Activated naive CD4-positive, alpha-beta T cell treated with anti-CD3 and anti-CD28 coated beads, Interleukin-2, amount 10 ng/mL, durations not matched to agents 7 days and 5 days (primary cell): ENCODE measurements at regions of chr20 and their contacts with region 1.

Region 1: DNA sequence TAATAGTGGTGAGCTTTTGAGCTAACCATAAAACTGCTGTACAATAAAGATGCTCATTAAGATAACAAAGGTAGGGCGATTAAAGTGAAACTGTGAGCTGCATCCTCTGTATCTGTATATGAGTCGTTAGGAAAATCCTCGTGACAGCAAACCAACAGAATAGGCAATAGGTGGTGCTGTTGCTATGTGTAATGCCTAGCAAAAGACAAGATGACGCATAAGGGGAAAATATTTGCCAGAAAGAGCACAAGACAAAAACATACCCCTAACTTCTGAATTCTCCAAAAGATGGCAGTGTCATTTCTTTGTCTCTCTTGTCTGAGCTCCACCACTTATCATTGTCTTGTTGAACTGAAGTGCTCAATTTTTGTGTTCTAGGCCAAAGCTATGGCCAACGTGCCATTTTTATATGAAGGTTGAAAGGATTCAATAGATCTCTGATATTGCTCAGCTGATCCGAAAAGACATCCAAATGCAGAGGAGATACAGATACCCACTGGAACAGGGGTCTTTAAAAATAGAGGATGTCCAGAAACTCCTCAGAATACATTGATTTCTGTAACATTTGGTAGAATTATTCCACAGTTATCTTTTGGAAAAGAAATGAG is 56.3 kb upstream of the ANKEF1 start:
- DNase-seq: peak; percentile 50
- H3K4me3 Mint-ChIP-seq: no peak overlapping the region
- H3K27ac Mint-ChIP-seq: no peak overlapping the region
- H3K4me1 Mint-ChIP-seq: no peaks in the 10 kb centered on the region
- H3K27me3 Mint-ChIP-seq: no peaks in the 10 kb centered on the region

Region 2: DNA sequence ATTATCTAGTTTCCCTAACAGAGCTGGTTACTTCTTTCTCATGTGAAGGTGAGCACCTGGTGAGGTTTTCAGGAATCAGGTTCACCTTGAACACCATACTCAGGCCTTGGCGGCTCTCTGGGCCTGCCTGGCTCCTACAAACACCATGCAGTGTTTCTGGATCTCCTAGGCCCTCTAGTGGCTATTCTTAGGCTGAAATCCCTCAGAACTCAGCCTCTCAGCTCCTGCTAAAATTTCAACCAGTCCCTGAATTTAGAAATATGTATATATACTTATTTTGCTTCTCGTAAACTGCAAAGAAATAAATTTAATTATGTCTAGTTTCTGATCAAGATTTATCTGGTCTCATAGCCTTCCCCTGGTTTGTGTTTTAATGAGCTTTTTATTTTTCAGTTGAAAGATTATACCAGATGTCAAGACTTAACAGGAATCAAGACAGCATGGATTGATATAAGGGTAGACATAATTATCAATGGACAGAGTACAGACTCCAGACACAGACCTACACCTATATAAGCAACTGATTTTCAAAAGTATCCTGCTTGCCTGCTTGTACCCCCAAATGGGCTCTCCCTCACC is 112.2 kb after region 1 on chr20:
- CTCF ChIA-PET with region 1: interaction called, 72 read pairs
- DNase-seq: peak; percentile 27
- H3K4me3 Mint-ChIP-seq: no peak overlapping the region
- H3K27ac Mint-ChIP-seq: no peak overlapping the region
- H3K4me1 Mint-ChIP-seq: no peaks in the 10 kb centered on the region
- H3K27me3 Mint-ChIP-seq: no peaks in the 10 kb centered on the region

Region 3: DNA sequence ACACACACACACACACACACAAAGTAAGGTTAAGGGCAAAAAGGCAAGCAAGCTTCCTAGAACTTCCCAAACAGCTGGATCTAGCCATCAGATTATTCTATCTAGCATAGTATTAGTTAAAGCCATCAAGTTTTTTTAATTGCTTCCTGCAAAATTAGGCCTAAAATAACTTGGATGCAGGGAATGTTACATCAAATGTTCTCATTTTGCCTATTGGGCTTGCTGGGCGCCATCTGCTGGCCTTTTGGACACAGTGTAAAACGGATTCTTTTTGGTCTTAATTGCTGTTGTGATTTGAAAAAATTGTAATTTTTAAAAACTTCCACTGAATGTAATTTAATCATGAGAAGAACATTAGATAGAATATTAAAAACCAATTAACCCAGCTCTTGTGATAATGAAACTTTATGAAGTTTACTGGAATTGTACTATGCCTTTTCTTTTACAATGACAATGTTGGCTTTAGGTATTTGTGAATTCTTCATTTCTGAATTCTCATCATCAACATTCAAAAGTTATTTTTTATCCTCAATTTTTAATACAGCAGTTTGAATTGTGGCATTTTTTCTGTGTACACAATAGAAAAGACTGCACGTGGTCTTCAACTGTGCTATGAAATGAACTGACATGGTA is 448.7 kb after region 1 on chr20:
- CTCF ChIA-PET with region 1: interaction called, 21 read pairs
- DNase-seq: peak; percentile 63
- H3K4me3 Mint-ChIP-seq: no peak overlapping the region
- H3K27ac Mint-ChIP-seq: no peak overlapping the region
- H3K4me1 Mint-ChIP-seq: peaks cover 30% of the 10 kb centered on the region
- H3K27me3 Mint-ChIP-seq: no peaks in the 10 kb centered on the region